ENCODE measurements at regions of chr7 and their contacts with region 1.

Region 1: DNA sequence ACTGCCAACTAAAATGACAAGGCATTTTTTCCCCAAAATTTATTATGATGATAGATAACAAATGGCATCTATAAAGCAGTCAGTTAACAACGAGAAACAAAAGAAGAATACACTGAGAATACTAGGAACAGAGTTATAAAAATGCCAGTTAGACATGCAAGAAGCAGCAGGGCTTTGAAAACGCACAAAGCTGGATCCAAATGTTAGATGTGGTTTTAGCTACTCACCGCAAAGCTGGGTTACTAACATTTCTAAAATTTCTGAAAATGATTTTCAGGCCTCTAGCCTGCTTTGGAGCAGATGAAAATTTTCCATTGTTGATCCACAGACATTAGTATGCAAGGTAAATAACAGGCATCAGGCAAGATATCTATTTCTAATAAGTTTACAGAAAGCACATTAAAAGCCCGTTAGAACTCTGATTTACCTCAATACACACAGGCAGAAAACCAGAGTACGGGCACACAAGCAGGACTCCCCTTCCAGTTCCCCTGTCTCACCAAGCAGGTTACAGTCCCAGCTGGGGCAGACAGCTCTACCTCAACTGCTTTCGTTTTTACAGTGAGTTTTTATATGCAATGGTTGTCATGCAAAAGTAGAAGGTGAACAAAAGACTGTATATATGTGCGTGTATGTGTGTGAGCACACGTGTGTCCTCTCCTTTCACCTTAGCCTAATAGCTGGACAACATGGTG is 37.9 kb downstream of the GLI3 start:
- DNase-seq: no peak
- H3K4me3 ChIP-seq: no peak overlapping the region
- H3K27ac ChIP-seq: no peak overlapping the region
- H3K4me1 ChIP-seq: peaks cover 0 to 16% (median 3%) of the 10 kb centered on the region in 4 donors
- H3K27me3 ChIP-seq: no peaks in the 10 kb centered on the region
- CTCF ChIP-seq: no peak

Region 2: GRCh38 chr7:42186212-42186611 is 12.9 kb before region 1 on chr7:
- intact Hi-C with region 1: loop called (anchors 1 kb)
- DNase-seq: no peak
- H3K4me3 ChIP-seq: no peak overlapping the region
- H3K27ac ChIP-seq: no peak overlapping the region
- H3K4me1 ChIP-seq: peaks cover 0 to 1% (median 0%) of the 10 kb centered on the region in 4 donors
- H3K27me3 ChIP-seq: no peaks in the 10 kb centered on the region
- CTCF ChIP-seq: peak in 1 of 2 experiments; percentile 22